ENCODE measurements at regions of chr14 and their contacts with region 1.

Region 1: DNA sequence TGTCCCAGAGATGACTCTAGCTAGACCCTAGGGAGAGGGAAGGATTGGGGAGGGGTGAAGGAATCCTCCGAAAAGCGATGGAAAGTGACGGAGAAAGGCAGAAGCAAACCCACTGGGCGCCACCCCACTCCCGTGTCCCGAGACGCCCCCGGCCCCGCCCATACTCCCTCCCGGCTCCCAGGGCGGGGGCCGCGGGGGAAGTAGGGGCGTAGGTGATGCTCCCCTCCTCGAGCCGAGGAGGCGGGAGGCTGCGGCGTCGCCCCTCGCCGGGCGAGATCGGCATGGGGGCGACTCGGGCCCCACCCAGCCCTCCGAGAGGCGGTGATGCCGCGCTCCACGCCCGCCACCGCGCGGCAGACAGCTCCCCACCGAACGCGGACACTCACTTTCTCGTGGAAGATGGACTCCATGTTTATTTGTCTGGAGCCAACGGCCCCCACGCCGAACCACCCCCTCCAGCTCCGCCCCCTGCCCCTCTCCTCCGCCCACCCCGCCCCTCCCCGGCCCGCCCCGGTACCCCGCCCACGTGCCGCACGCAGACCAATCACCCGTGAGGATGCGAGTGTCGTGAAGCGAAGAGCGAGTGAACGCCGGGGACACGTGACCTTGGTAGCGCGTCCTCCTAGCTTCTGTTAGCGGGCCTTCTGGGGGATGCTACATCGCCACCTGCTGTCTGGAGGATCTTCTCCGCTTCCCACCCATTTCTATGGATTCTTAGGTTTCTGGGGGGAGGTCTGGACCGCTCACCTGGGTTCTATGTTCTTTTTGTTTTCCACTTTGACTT is at the start of gene ATXN3:
- DNase-seq: peak; percentile 91 to 98 (median 95)
- H3K4me3 ChIP-seq: peak within 1 kb of the TSS; percentile 91
- H3K4me3 Mint-ChIP-seq: peak within 1 kb of the TSS; percentile 93 to 99 (median 96)
- H3K27ac ChIP-seq: peak within 1 kb of the TSS; percentile 80
- H3K27ac Mint-ChIP-seq: peak within 1 kb of the TSS; percentile 83 to 99 (median 96)
- H3K4me1 ChIP-seq: peaks cover 32% of the 10 kb centered on the region
- H3K4me1 Mint-ChIP-seq: peaks cover 36 to 60% (median 59%) of the 10 kb centered on the region in 3 donors
- H3K27me3 ChIP-seq: no peaks in the 10 kb centered on the region
- H3K27me3 Mint-ChIP-seq: peaks cover 0 to 2% of the 10 kb centered on the region in 2 donors
- total RNA-seq, gene ATXN3: 25.1 to 32.5 TPM

Region 2: GRCh38 chr14:92039719-92040430 is 66.5 kb before region 1 on chr14 and contains the start of gene TRIP11:
- CTCF ChIA-PET with region 1: interaction called, 15 read pairs
- POLR2A ChIA-PET with region 1: interaction called, 16 read pairs
- DNase-seq: peak; percentile 88 to 96 (median 92)
- H3K4me3 ChIP-seq: peak within 1 kb of the TSS; percentile 83
- H3K4me3 Mint-ChIP-seq: peak within 1 kb of the TSS; percentile 93 to 99 (median 97)
- H3K27ac ChIP-seq: peak within 1 kb of the TSS; percentile 89
- H3K27ac Mint-ChIP-seq: peak within 1 kb of the TSS; percentile 98 to 100 (median 98)
- H3K4me1 ChIP-seq: peaks cover 38% of the 10 kb centered on the region
- H3K4me1 Mint-ChIP-seq: peaks cover 47 to 57% (median 49%) of the 10 kb centered on the region in 3 donors
- H3K27me3 ChIP-seq: no peaks in the 10 kb centered on the region
- H3K27me3 Mint-ChIP-seq: no peaks in the 10 kb centered on the region
- total RNA-seq, gene TRIP11: 45.7 to 50.8 TPM

Region 3: GRCh38 chr14:92121670-92122350 is 15.5 kb after region 1 on chr14 and contains the starts of genes CPSF2 and NDUFB1:
- CTCF ChIA-PET with region 1: interaction called, 81 read pairs
- POLR2A ChIA-PET with region 1: interaction called, 44 read pairs
- DNase-seq: peak; percentile 76 to 88 (median 81)
- H3K4me3 ChIP-seq: peak within 1 kb of the TSS; percentile 95
- H3K4me3 Mint-ChIP-seq: peak within 1 kb of the TSS; percentile 94 to 100 (median 99)
- H3K27ac ChIP-seq: peak within 1 kb of the TSS; percentile 98
- H3K27ac Mint-ChIP-seq: peak within 1 kb of the TSS; percentile 99 to 100 (median 100)
- H3K4me1 ChIP-seq: peaks cover 23% of the 10 kb centered on the region
- H3K4me1 Mint-ChIP-seq: peaks cover 45 to 75% (median 52%) of the 10 kb centered on the region in 3 donors
- H3K27me3 ChIP-seq: no peaks in the 10 kb centered on the region
- H3K27me3 Mint-ChIP-seq: peaks cover 0 to 2% of the 10 kb centered on the region in 2 donors
- total RNA-seq, gene CPSF2: 134 to 144 TPM
- total RNA-seq, gene NDUFB1: 103 to 112 TPM

Region 4: DNA sequence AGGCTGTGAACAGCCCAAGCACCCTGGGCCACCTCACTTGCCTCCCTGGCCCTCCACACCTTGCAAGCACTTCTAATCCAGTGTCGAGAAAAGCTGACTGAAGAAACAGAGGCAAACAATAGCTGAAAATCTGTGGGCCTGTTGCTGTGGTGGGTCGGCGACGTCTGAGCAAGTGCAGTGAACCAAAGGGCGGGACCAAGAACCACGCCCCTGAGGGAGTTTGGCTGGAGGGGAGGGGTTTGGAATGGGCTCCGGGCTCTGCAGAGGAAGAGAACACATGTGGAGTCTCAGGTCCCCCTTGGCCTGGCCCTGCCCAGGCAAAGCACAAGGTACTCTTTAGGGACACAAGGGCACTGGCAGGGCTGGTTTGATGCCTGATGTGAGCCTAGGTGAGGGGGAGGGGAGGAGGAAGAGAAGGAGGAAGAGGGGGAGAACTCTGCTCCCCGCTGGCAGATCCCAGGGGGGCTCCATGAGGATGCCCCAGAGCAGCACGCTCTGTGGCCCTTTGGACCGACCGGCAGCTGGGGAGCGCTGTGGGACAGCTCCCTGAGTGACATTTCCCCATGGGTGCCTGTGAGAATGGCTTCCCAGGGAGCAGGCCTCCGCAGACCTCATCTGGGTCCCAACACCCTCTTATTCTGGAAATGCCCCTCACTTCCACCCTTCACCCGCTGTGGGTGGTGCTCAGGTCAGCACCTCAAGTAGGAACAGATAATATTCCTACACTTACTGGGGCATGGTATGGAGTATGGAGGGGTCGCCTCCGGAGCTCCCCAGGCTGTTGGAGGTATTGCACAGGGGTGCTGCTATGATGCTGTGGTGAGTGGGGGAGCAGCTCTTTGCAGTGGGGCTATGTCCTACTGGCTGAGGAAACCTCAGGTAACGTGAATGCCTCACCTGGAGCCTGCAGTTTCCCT is 100.9 kb after region 1 on chr14:
- CTCF ChIA-PET with region 1: no interaction called
- POLR2A ChIA-PET with region 1: no interaction called
- DNase-seq: no peak
- H3K4me3 ChIP-seq: no peak overlapping the region
- H3K4me3 Mint-ChIP-seq: no peak overlapping the region
- H3K27ac ChIP-seq: no peak overlapping the region
- H3K27ac Mint-ChIP-seq: no peak overlapping the region
- H3K4me1 ChIP-seq: no peaks in the 10 kb centered on the region
- H3K4me1 Mint-ChIP-seq: no peaks in the 10 kb centered on the region
- H3K27me3 ChIP-seq: no peaks in the 10 kb centered on the region
- H3K27me3 Mint-ChIP-seq: peaks cover 2 to 18% of the 10 kb centered on the region in 2 donors

Measured in CD8-positive, alpha-beta memory T cell (primary cell).